ENCODE measurements at regions of chr7 and their contacts with region 1.

Region 1: DNA sequence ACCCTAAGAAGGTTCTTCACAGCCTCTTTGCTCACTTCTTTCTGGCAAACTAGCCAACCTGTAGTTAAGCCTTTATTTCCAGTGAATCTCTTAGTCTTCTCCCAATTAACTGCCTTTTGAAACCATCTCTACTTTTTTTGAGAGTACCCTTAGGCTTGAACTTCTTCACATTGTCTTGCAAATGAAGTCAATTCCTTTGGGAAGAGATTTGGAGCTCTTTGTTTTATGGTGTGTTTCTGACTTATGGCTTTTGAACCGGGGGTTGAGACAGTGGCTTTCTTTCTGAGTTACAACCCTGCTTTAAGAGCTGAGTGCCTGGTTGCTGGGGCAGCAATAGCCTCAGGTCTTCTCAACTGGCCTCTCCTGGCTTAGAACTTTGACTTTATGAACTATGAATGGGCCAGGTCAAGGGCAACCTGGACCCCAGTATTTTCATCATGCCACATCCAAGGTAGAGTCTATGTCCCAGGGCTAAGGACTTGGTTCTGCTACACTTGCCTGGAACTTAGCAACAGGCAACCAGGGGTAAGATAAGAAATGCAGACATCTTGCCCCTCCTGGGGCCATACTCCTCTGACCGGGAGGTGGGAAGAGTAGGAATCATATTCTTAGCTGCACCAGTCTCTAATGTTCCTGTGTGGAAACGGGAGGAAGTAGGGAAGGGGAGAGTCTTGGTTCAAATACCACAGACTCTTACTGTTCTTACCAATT is 53.0 kb downstream of the SP4 start:
- DNase-seq: no peak
- ATAC-seq: no peak
- H3K4me3 ChIP-seq: no peak overlapping the region
- H3K4me3 Mint-ChIP-seq: peak overlapping the region in 2 of 10 donors; percentile 3 to 21
- H3K27ac ChIP-seq: no peak overlapping the region
- H3K27ac Mint-ChIP-seq: peak overlapping the region in 8 of 9 donors; percentile 14 to 74 (median 44)
- H3K4me1 ChIP-seq: peaks cover 0 to 3% of the 10 kb centered on the region in 2 donors
- H3K4me1 Mint-ChIP-seq: peaks cover 27 to 58% (median 41%) of the 10 kb centered on the region in 7 donors
- H3K27me3 ChIP-seq: no peaks in the 10 kb centered on the region
- H3K27me3 Mint-ChIP-seq: no peaks in the 10 kb centered on the region

Region 2: GRCh38 chr7:21461282-21461681 is 19.6 kb before region 1 on chr7:
- CTCF ChIA-PET with region 1: no interaction called
- POLR2A ChIA-PET with region 1: no interaction called
- intact Hi-C with region 1: no loop called
- DNase-seq: no peak
- ATAC-seq: no peak
- H3K4me3 ChIP-seq: no peak overlapping the region
- H3K4me3 Mint-ChIP-seq: peak overlapping the region in 1 of 10 donors; percentile 31
- H3K27ac ChIP-seq: no peak overlapping the region
- H3K27ac Mint-ChIP-seq: peak overlapping the region in 2 of 9 donors; percentile 0 to 7
- H3K4me1 ChIP-seq: peaks cover 0 to 8% of the 10 kb centered on the region in 2 donors
- H3K4me1 Mint-ChIP-seq: peaks cover 23 to 71% (median 55%) of the 10 kb centered on the region in 7 donors
- H3K27me3 ChIP-seq: no peaks in the 10 kb centered on the region
- H3K27me3 Mint-ChIP-seq: no peaks in the 10 kb centered on the region

Region 3: GRCh38 chr7:21497072-21497471 is 16.2 kb after region 1 on chr7:
- CTCF ChIA-PET with region 1: interaction called, 3 read pairs
- POLR2A ChIA-PET with region 1: no interaction called
- intact Hi-C with region 1: loop called in 1 of 2 experiments (anchors 2 kb)
- DNase-seq: no peak
- ATAC-seq: no peak
- H3K4me3 ChIP-seq: no peak overlapping the region
- H3K4me3 Mint-ChIP-seq: no peak overlapping the region
- H3K27ac ChIP-seq: no peak overlapping the region
- H3K27ac Mint-ChIP-seq: no peak overlapping the region
- H3K4me1 ChIP-seq: no peaks in the 10 kb centered on the region
- H3K4me1 Mint-ChIP-seq: peaks cover 0 to 7% (median 0%) of the 10 kb centered on the region in 7 donors
- H3K27me3 ChIP-seq: no peaks in the 10 kb centered on the region
- H3K27me3 Mint-ChIP-seq: no peaks in the 10 kb centered on the region

Measured in naive thymus-derived CD4-positive, alpha-beta T cell (primary cell).